OCI-LY7 (cell line): ENCODE measurements at regions of chr4 and their contacts with region 1.

Region 1: GRCh38 chr4:149897783-149898182 is 82.1 kb upstream of the IQCM start:
- DNase-seq: peak; percentile 12
- H3K4me3 ChIP-seq: no peak overlapping the region
- H3K27ac ChIP-seq: no peak overlapping the region
- H3K4me1 ChIP-seq: no peaks in the 10 kb centered on the region
- CTCF ChIP-seq: peak; percentile 68

Region 2: DNA sequence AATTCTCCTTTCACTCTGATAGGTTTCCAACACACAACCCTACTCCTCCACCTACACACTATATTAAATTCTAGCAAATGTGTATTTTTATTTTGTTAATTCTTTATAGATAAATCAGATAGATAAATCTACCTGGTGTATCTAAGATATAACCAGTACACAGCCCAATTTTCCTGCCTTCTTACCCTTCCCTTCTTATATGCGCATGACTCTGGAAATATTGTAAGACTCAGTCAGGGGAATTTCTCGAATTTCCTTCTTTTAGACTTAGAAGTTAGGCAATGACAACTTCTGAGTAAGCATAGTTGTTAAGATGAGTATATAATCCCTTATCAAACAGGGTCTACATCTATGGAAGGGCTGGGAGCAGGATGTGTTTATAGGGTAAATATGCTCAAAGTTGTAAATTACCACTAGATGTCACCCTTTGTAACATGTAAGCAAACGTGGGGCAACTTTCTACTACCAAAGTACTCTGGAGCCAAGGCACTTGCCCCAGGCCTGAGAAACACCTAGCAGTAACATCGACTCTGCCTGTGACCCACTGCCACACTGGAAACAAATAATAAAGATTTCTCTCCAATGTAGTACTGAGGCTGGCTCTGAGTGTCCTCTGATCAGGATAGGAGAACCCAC is 526.9 kb before region 1 on chr4:
- CTCF ChIA-PET with region 1: no interaction called
- POLR2A ChIA-PET with region 1: no interaction called
- intact Hi-C with region 1: loop called (anchors 2 kb)
- DNase-seq: peak; percentile 45
- H3K4me3 ChIP-seq: no peak overlapping the region
- H3K27ac ChIP-seq: no peak overlapping the region
- H3K4me1 ChIP-seq: no peaks in the 10 kb centered on the region
- CTCF ChIP-seq: peak; percentile 74

Region 3: DNA sequence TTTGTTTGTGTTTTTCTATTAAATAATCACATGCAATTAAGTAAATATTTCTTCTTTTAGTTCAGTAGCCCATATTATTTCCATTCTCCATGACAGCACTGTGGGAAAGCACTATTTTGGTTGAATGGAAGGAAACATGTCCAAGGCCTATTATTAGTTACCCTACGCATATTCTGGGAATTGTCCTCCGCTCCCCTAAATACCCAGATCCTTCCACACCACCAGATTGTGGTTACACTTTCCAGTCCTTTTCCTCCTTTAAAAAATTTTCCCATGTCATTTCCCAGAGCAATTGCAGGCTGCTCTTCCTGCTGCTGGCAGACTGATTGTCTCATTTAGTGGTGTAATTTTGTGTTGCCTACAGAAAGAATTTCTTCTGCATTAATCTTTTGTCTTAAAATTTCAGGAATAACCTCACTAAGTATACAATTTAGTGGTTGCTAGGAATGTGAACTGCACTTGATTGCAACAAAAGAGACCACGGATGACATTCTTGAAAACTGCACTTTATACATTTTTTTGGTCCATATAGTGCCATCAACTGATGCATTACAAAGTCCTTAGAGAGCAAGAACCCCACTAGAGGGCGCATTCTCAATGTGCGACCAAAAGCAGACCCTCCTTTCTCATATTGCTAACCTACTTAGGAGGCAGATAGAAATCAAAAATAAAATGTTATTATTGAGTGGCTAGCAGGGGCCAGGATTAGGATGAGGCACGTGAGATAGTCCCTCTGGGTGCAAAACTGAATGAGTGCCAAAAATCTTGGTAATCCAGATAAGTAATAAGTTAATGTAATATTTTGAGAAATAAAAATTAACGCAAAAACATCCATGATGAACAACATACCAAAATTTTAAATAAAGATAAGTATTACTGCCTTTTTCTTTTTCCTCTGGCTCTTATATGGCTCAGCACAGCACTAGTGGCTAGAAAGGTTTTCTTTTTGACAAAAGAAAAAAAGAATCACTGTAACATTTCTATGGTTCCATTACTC is 16.6 kb after region 1 on chr4:
- CTCF ChIA-PET with region 1: no interaction called
- POLR2A ChIA-PET with region 1: no interaction called
- intact Hi-C with region 1: no loop called
- DNase-seq: peak; percentile 58
- H3K4me3 ChIP-seq: no peak overlapping the region
- H3K27ac ChIP-seq: no peak overlapping the region
- H3K4me1 ChIP-seq: no peaks in the 10 kb centered on the region
- CTCF ChIP-seq: peak; percentile 93

Region 4: DNA sequence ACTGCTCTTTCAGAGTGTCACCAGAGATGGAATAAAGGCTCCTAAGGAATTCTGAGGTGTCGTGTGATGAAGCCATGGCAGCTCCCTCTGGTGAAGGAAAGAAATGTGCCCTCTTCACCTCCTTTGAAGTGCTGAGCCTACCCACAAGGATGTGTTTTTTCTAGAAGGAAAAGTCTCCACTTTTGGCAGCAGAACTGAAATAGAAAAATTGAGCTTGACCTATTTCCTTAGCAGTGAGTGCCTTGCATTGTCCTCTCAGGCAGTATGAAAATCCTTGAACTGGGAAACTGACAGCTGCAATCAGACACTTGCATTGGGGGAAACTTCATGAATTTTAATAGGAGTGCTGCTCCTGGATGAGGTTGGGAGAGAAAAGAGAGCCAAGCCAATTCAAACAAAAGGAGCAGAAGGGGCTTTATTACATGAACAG is 275.7 kb after region 1 on chr4:
- CTCF ChIA-PET with region 1: no interaction called
- POLR2A ChIA-PET with region 1: no interaction called
- intact Hi-C with region 1: no loop called
- DNase-seq: no peak
- H3K4me3 ChIP-seq: no peak overlapping the region
- H3K27ac ChIP-seq: no peak overlapping the region
- H3K4me1 ChIP-seq: no peaks in the 10 kb centered on the region
- CTCF ChIP-seq: no peak